Dorsolateral prefrontal cortex (tissue), 120 donors: ENCODE measurements at regions of chr2 and their contacts with region 1.

Region 1: GRCh38 chr2:177164584-177165052 is 48.0 kb upstream of the HNRNPA3 start:
- DNase-seq: peak; percentile 77 to 92 (median 86)
- H3K4me3 ChIP-seq: peak overlapping the region; percentile 21 to 75 (median 56)
- H3K27ac ChIP-seq: peak overlapping the region; percentile 70 to 100 (median 97)
- H3K27me3 ChIP-seq: no peaks in the 10 kb centered on the region
- CTCF ChIP-seq: peak; percentile 91 to 100 (median 99)

Region 2: GRCh38 chr2:177212106-177212890 is 47.7 kb after region 1 on chr2 and contains the start of gene HNRNPA3:
- intact Hi-C with region 1: loop called (anchors 1 to 2 kb)
- DNase-seq: peak; percentile 98 to 100 (median 99)
- H3K4me3 ChIP-seq: peak within 1 kb of the TSS; percentile 69 to 95 (median 86)
- H3K27ac ChIP-seq: peak within 1 kb of the TSS; percentile 95 to 100 (median 99)
- H3K27me3 ChIP-seq: no peaks in the 10 kb centered on the region
- CTCF ChIP-seq: peak in 53 of 56 donors; percentile 9 to 69 (median 49)
- total RNA-seq, gene HNRNPA3: 105 to 187 (median 137) TPM

Region 3: DNA sequence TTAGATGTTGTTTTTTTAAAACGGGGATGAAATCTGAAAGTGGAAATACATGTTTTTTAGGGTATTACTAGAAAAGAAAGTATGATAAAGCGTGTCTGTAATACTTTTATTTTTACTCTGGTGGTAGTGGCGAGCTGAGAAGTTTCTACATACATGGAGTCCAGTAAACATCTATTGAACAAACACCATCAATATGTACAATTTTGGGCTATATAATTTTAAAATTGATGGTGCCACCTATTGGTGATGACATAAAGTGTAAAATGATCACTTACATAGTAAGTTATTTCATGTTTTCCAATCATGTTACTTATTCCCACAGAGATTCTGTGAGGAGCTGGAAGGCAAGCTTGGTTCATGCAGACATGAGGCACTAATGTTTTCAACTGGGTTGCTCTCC is 131.4 kb after region 1 on chr2:
- intact Hi-C with region 1: loop called in 1 of 2 experiments (anchors 1 kb)
- DNase-seq: no peak
- H3K4me3 ChIP-seq: peak overlapping the region in 20 of 59 donors; percentile 1 to 46 (median 24)
- H3K27ac ChIP-seq: peak overlapping the region in 36 of 59 donors; percentile 0 to 75 (median 50)
- H3K27me3 ChIP-seq: no peaks in the 10 kb centered on the region
- CTCF ChIP-seq: peak in 53 of 56 donors; percentile 19 to 76 (median 52)

Region 4: DNA sequence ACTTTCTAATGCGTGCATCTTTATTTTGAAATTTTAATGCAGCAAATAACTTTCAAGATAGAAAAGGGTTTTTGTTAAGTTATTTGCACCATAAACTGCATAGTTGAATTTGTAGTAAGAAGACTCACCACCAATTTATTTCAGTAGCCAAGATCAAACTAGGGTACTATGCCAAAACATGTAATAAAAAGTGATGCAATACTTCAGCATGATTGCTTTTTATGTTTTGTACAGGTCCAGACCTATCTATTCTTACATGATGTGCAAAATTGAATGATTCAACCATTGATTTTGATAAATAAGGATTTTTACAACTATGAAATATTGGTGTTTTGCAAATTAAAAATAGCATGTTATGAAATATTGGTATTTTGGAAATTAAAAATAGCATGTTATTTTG is 254.7 kb after region 1 on chr2:
- intact Hi-C with region 1: loop called (anchors 2 to 5 kb)
- DNase-seq: no peak
- H3K4me3 ChIP-seq: no peak overlapping the region
- H3K27ac ChIP-seq: no peak overlapping the region
- H3K27me3 ChIP-seq: no peaks in the 10 kb centered on the region
- CTCF ChIP-seq: no peak

Region 5: DNA sequence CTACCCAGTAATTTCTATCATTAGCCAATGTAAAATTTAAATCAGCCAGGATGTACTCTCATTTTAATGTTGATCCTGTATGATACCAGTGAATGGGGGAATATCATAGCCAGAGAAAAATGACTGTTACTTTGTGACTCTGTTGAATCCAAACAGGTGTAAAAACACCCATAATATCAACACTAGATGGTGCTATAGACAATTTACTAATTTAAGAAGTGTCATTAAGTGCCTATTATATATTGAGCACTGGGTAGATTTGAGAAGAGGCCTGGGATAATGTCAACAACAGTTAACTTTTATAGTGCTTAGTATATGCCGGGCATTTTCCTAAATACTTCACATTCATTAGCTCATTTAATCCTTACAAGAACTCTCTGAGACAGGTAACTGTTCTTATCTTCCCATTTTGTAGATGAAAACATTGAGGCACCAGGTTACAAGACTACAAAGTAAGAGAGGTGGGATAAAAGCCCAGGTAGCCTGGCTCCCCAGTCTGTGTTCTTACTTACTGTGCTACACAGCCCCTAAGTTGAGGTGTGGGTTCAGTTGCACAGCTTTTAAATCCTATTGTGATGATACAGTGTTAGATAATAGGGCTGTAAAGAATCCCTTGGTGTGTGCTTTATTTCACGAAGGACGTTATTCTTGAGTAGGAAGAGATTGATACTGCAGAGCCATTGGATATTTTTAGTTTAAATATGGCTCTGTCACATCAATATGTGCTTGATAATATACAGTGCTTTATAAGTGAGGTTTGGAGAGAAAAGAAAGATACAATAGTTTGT is 553.4 kb after region 1 on chr2:
- intact Hi-C with region 1: loop called in 1 of 2 experiments (anchors 10 kb)
- DNase-seq: no peak
- H3K4me3 ChIP-seq: no peak overlapping the region
- H3K27ac ChIP-seq: no peak overlapping the region
- H3K27me3 ChIP-seq: no peaks in the 10 kb centered on the region
- CTCF ChIP-seq: peak in 14 of 56 donors; percentile 7 to 44 (median 18)